Activated CD4-positive, alpha-beta T cell treated with anti-CD3 and anti-CD28 coated beads for 36 hours (primary cell): ENCODE measurements at regions of chr11 and their contacts with region 1.

Region 1: DNA sequence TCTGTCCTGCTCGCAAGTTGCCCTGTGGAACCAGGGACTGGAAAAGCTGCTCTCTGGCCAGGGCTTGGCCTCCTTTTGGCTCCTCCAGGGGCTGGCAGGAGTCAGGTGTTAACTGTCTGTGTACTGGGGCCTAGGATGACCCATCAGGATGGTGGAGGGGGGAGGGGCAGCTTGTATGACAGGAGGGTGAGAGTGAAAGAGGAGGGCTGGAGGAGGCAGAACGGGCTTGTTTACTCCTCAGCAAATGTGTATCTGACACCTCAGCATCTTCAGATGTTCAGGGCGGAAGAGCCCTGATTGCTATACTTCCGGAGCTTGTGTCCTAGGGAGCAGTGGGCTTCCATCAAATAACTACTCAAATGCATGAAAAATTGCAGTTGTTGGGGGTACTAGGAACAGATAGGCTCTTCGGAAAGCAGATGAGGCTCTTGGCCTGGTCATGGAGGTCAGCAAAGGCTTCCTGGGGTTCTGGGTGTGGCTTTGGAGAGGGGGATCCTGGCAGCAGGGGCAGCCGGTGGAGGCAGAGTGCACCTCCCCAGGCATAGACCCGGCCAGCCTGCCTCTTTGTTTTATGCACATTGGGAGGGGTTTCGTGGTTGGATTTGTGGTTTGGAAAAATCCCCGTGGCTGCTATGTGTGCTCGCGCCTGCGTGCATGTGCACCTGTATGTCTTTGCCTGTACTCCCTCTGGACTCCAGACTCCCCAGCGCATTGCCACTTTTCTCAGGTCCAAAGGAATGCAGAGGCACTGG is 31.2 kb downstream of the CD82 start:
- DNase-seq: peak; percentile 88
- ATAC-seq: peak; percentile 76
- H3K4me3 Mint-ChIP-seq: peak overlapping the region; percentile 49
- H3K27ac Mint-ChIP-seq: peak overlapping the region; percentile 79
- H3K4me1 Mint-ChIP-seq: peaks cover 84% of the 10 kb centered on the region
- H3K27me3 Mint-ChIP-seq: no peaks in the 10 kb centered on the region

Region 2: GRCh38 chr11:43905813-43906241 is 690.9 kb before region 1 on chr11:
- CTCF ChIA-PET with region 1: no interaction called
- POLR2A ChIA-PET with region 1: no interaction called
- intact Hi-C with region 1: no loop called
- DNase-seq: no peak
- ATAC-seq: no peak
- H3K4me3 Mint-ChIP-seq: no peak overlapping the region
- H3K27ac Mint-ChIP-seq: no peak overlapping the region
- H3K4me1 Mint-ChIP-seq: peaks cover 12% of the 10 kb centered on the region
- H3K27me3 Mint-ChIP-seq: no peaks in the 10 kb centered on the region

Region 3: GRCh38 chr11:44301856-44302231 is 294.9 kb before region 1 on chr11:
- CTCF ChIA-PET with region 1: no interaction called
- POLR2A ChIA-PET with region 1: no interaction called
- intact Hi-C with region 1: no loop called
- DNase-seq: peak; percentile 37
- ATAC-seq: no peak
- H3K4me3 Mint-ChIP-seq: no peak overlapping the region
- H3K27ac Mint-ChIP-seq: no peak overlapping the region
- H3K4me1 Mint-ChIP-seq: peaks cover 24% of the 10 kb centered on the region
- H3K27me3 Mint-ChIP-seq: peaks cover 57% of the 10 kb centered on the region

Region 4: GRCh38 chr11:44574610-44575287 is 22.0 kb before region 1 on chr11:
- CTCF ChIA-PET with region 1: interaction called, 4 read pairs
- POLR2A ChIA-PET with region 1: interaction called, 4 read pairs
- intact Hi-C with region 1: loop called (anchors 1 kb)
- DNase-seq: peak; percentile 75
- ATAC-seq: peak; percentile 65
- H3K4me3 Mint-ChIP-seq: peak overlapping the region; percentile 51
- H3K27ac Mint-ChIP-seq: peak overlapping the region; percentile 100
- H3K4me1 Mint-ChIP-seq: peaks cover 95% of the 10 kb centered on the region
- H3K27me3 Mint-ChIP-seq: no peaks in the 10 kb centered on the region